ENCODE measurements at regions of chr3 and their contacts with region 1.

Region 1: DNA sequence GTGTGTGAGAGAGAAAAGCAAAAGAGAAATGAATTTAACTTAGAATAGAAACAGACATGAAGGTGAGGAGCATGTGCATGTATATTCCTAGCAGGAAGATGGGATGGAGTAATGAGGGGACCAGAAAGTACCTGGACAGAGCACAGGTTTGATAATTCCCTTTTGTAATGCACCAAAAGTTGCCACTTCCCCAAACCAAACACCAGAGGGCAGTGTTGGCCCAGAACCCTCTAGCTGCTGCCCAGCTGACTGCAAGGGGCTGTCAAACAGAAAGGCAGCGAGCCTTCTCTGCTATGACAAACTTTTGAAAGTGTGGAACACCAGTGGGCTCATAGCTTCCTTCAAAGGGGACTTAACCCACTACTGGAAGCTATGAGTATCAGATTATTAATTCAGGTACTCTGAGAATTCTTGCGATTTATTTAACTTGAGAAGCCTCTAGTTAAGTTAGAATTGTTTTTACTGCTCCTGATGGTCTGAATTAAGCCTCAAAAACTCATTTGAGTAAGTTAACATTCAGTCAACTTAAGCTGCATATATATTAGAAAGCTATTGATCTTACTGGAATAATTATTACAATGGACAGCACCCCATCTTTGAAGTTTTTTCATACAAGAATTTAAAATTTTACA is 234.9 kb downstream of the NEK10 start:
- DNase-seq: no peak
- H3K4me3 ChIP-seq: no peak overlapping the region
- H3K27ac ChIP-seq: no peak overlapping the region
- H3K4me1 ChIP-seq: peaks cover 0 to 28% (median 0%) of the 10 kb centered on the region in 3 donors
- H3K27me3 ChIP-seq: no peaks in the 10 kb centered on the region
- CTCF ChIP-seq: peak; percentile 63 to 88 (median 82)
- POLR2A ChIP-seq: no peak

Region 2: DNA sequence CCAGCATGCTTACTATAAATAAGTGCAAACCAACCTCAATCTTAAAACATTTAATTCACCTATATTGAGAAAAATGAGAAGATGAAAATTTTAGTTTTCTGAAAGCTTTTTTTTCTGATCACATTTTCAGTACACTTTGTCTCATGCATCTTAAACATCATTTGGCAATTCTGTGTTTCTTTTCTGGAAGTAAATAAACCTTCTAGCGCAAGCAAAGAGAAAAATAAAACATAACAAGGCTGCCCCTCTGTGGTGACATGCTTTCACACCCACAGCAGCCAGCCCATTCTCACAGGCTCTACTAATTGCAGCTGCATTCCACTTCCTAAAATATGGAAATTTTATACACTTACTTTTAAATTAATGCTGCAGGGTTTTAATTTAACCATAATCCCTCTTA is 144.8 kb after region 1 on chr3:
- intact Hi-C with region 1: loop called (anchors 10 kb)
- DNase-seq: no peak
- H3K4me3 ChIP-seq: no peak overlapping the region
- H3K27ac ChIP-seq: no peak overlapping the region
- H3K4me1 ChIP-seq: no peaks in the 10 kb centered on the region
- H3K27me3 ChIP-seq: no peaks in the 10 kb centered on the region
- CTCF ChIP-seq: peak in 5 of 6 experiments; percentile 6 to 34 (median 19)
- POLR2A ChIP-seq: no peak

Measured in esophagus squamous epithelium (tissue), 5 donors.